Activated CD4-positive, alpha-beta memory T cell treated with anti-CD3 and anti-CD28 coated beads for 36 hours (primary cell): ENCODE measurements at regions of chr10 and their contacts with region 1.

Region 1: DNA sequence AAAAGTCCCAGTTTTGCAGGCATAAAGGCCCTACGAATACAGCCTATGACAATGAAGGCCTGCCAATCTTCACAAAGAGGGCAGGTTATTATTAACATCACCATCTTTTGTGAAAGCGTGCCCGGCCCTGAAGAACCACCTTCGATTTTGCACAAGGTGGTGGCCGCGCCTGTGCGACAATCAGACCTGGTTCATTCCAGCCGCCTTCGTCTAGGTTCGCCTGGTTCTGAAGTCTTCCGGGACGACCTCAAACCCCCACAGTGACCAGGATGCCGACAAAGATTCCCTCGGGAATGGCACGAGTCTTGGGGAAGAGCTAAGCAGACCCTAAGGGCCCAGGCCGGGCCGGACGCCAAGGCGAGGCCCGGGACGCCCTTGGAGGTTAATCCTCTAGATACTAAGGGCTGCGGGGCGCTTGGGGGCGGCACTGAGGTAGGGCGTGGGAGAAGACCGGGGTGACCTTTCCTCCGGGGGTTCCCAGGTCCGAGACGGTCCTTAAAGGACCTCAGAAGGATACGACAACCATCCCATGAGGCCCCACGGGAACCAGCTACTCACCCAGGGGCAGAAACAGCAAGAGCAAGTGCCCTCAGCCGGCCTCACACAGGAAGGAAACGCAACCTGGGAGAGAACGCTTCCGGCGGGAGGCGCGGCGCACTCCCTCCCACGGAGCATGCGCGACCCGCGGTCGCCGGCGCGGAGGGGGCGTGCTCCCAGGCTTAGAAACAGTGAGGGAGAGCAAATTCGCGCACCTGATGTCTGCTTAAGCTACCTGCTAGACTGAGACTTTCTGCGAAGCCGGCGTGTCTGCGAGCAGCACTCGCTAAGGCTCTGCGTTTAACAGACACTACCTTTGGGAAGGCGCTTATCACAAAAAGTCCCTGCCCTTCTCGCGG is at the start of gene ATAD1:
- DNase-seq: peak; percentile 93
- H3K4me3 Mint-ChIP-seq: peak within 1 kb of the TSS; percentile 97
- H3K27ac Mint-ChIP-seq: peak within 1 kb of the TSS; percentile 98
- H3K4me1 Mint-ChIP-seq: peaks cover 29% of the 10 kb centered on the region
- H3K27me3 Mint-ChIP-seq: no peaks in the 10 kb centered on the region
- total RNA-seq, gene ATAD1: 39.4 to 42.8 TPM

Region 2: DNA sequence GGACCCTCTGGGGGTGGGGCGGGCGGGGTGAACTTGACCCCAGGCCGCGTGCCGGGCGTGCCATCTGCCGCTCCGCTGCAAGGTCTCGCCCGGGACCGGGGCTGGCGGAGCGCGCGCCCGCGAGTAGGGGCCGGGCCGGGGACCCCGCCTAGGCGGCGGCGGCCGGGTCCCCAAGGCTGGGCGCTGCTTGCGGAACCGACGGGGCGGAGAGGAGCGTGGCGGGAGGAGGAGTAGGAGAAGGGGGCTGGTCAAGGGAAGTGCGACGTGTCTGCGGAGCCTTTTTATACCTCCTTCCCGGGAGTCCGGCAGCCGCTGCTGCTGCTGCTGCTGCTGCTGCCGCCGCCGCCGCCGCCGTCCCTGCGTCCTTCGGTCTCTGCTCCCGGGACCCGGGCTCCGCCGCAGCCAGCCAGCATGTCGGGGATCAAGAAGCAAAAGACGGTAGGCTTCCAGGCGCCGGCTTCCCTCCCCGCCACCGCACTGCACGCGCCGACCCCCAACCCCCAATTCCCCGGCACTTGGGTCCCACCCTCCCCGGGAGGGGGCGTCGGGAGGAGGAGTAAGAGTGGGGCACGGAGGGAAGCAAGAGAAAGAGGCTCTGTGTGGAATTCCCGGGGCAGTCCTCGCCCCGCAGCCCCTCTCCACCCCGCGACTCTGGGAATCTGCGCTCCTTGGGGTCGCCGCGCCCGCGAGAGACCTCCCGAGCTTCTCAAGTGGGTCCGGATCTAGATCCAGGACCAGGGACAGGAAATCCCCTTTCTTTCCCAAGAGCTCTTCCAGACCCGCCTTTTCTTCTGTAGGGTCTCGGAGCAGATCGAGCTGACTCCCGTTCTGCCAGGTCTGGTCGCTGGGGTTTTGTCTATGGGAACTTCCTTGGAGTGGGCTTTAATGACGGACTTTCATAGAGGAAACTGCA is 158.0 kb before region 1 on chr10 and contains the start of gene PAPSS2:
- CTCF ChIA-PET with region 1: no interaction called
- POLR2A ChIA-PET with region 1: no interaction called
- intact Hi-C with region 1: loop called (anchors 5 kb)
- DNase-seq: peak; percentile 34
- H3K4me3 Mint-ChIP-seq: peak within 1 kb of the TSS; percentile 66
- H3K27ac Mint-ChIP-seq: no peak within 1 kb of the TSS
- H3K4me1 Mint-ChIP-seq: peaks cover 13% of the 10 kb centered on the region
- H3K27me3 Mint-ChIP-seq: peaks cover 53% of the 10 kb centered on the region
- total RNA-seq, gene PAPSS2: 0.22 to 0.40 TPM

Region 3: DNA sequence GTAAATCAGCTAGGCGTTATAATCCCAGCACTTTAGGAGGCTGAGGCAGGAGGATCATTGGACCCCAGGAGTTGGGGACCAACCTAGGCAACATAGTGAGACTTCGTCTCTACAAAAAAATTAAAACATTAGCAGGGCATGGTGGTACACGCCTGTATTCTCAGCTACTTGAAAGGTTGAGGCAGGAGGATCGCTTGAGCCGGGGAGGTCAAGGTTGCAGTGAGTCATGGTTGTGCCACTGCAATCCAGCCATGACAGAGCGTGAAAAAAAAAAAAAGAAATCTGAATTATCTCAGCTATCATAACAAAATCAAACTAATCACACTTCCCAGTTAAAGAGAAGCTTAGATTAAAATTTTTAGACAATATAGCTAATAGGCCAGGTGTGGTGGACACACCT is 35.1 kb before region 1 on chr10:
- CTCF ChIA-PET with region 1: no interaction called
- POLR2A ChIA-PET with region 1: no interaction called
- intact Hi-C with region 1: no loop called
- DNase-seq: no peak
- H3K4me3 Mint-ChIP-seq: no peak overlapping the region
- H3K27ac Mint-ChIP-seq: no peak overlapping the region
- H3K4me1 Mint-ChIP-seq: no peaks in the 10 kb centered on the region
- H3K27me3 Mint-ChIP-seq: no peaks in the 10 kb centered on the region

Region 4: GRCh38 chr10:87829986-87830729 is 12.3 kb after region 1 on chr10:
- CTCF ChIA-PET with region 1: interaction called, 8 read pairs
- POLR2A ChIA-PET with region 1: interaction called, 21 read pairs
- intact Hi-C with region 1: no loop called
- DNase-seq: no peak
- H3K4me3 Mint-ChIP-seq: no peak overlapping the region
- H3K27ac Mint-ChIP-seq: no peak overlapping the region
- H3K4me1 Mint-ChIP-seq: peaks cover 38% of the 10 kb centered on the region
- H3K27me3 Mint-ChIP-seq: peaks cover 2% of the 10 kb centered on the region

Region 5: DNA sequence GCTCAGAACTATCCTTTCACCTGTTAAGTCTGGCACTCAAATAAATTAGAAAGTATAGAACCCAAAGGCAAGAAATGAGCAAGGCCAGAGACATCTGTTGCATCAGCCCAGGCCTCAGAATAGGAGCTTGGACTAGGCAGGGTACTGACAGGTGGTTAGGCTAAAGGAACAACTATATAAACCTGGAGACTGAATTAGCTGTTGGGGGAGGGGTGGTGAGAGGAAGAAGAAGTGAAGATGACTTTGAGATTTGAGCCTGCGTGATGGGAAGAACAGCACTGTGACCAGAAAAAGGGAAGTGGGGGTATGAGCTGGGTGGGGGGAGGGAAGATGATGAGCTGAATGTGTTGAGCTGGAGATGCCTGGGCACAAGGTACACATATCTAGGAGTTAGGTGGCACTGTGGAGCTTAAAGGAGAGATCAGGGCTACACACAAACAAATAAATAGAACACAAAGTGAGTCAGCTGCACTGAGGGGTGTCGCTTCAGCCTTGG is 290.3 kb after region 1 on chr10:
- CTCF ChIA-PET with region 1: no interaction called
- POLR2A ChIA-PET with region 1: no interaction called
- intact Hi-C with region 1: no loop called
- DNase-seq: no peak
- H3K4me3 Mint-ChIP-seq: no peak overlapping the region
- H3K27ac Mint-ChIP-seq: no peak overlapping the region
- H3K4me1 Mint-ChIP-seq: peaks cover 9% of the 10 kb centered on the region
- H3K27me3 Mint-ChIP-seq: peaks cover 5% of the 10 kb centered on the region

Region 6: GRCh38 chr10:88386821-88387773 is 569.2 kb after region 1 on chr10:
- CTCF ChIA-PET with region 1: interaction called, 11 read pairs
- POLR2A ChIA-PET with region 1: no interaction called
- intact Hi-C with region 1: no loop called
- DNase-seq: no peak
- H3K4me3 Mint-ChIP-seq: no peak overlapping the region
- H3K27ac Mint-ChIP-seq: peak overlapping the region; percentile 42
- H3K4me1 Mint-ChIP-seq: peaks cover 16% of the 10 kb centered on the region
- H3K27me3 Mint-ChIP-seq: no peaks in the 10 kb centered on the region

Region 7: GRCh38 chr10:89163265-89163995 is 1345.6 kb after region 1 on chr10:
- CTCF ChIA-PET with region 1: no interaction called
- POLR2A ChIA-PET with region 1: no interaction called
- intact Hi-C with region 1: loop called (anchors 5 kb)
- DNase-seq: peak; percentile 76
- H3K4me3 Mint-ChIP-seq: peak overlapping the region; percentile 10
- H3K27ac Mint-ChIP-seq: peak overlapping the region; percentile 35
- H3K4me1 Mint-ChIP-seq: peaks cover 42% of the 10 kb centered on the region
- H3K27me3 Mint-ChIP-seq: peaks cover 15% of the 10 kb centered on the region